HCT116 (cell line): ENCODE measurements at regions of chr5 and their contacts with region 1.

Region 1: GRCh38 chr5:39599721-39600431 is 175.1 kb upstream of the DAB2 start:
- DNase-seq: peak; percentile 24
- ATAC-seq: peak; percentile 42
- H3K4me3 ChIP-seq: no peak overlapping the region
- H3K27ac ChIP-seq: no peak overlapping the region
- H3K4me1 ChIP-seq: peaks cover 0 to 4% of the 10 kb centered on the region in 2 experiments; a peak in 1 of 4 replicates
- H3K27me3 ChIP-seq: no peaks in the 10 kb centered on the region
- CTCF ChIP-seq: peak; percentile 36 to 63 (median 56); a peak in 4 of 6 replicates
- POLR2A ChIP-seq: no peak
- RAD21 ChIP-seq: peak; percentile 78

Region 2: DNA sequence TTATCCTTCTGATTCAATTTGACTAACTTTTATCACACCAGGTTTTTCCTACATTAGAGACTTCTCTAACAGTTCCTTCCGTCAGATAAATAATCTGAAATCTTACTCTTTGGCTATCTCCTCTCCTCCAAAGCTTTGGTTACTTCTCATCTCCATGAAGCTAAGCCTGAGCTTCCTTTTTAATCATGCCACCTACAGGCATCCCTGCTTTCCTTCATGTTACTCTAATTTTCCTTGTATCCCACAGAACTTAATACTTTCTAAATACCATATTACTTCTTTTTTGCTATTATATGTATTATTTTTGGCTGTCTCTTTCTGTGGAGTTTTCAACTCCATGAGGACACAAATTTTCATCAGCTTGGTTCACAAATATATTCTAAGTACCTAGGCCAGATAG is 285.3 kb before region 1 on chr5:
- CTCF ChIA-PET with region 1: no interaction called
- POLR2A ChIA-PET with region 1: no interaction called
- RAD21 ChIA-PET with region 1: no interaction called
- intact Hi-C with region 1: no loop called
- DNase-seq: no peak
- ATAC-seq: no peak
- H3K4me3 ChIP-seq: no peak overlapping the region
- H3K27ac ChIP-seq: no peak overlapping the region
- H3K4me1 ChIP-seq: no peaks in the 10 kb centered on the region
- H3K27me3 ChIP-seq: no peaks in the 10 kb centered on the region
- CTCF ChIP-seq: no peak; a peak in 1 of 6 replicates
- POLR2A ChIP-seq: no peak
- RAD21 ChIP-seq: 0 out of 2 replicates have a peak, but pooled peaks have one; percentile 15

Region 3: GRCh38 chr5:39691993-39692392 is 92.1 kb after region 1 on chr5:
- CTCF ChIA-PET with region 1: no interaction called
- POLR2A ChIA-PET with region 1: no interaction called
- RAD21 ChIA-PET with region 1: no interaction called
- intact Hi-C with region 1: loop called (anchors 5 kb)
- DNase-seq: peak; percentile 15
- ATAC-seq: peak; percentile 84
- H3K4me3 ChIP-seq: no peak overlapping the region
- H3K27ac ChIP-seq: no peak overlapping the region
- H3K4me1 ChIP-seq: no peaks in the 10 kb centered on the region
- H3K27me3 ChIP-seq: no peaks in the 10 kb centered on the region
- CTCF ChIP-seq: peak; percentile 33 to 53 (median 37); a peak in 4 of 6 replicates
- POLR2A ChIP-seq: no peak
- RAD21 ChIP-seq: peak; percentile 48

Region 4: GRCh38 chr5:39948867-39949468 is 349.1 kb after region 1 on chr5:
- CTCF ChIA-PET with region 1: no interaction called
- POLR2A ChIA-PET with region 1: no interaction called
- RAD21 ChIA-PET with region 1: no interaction called
- intact Hi-C with region 1: loop called (anchors 10 kb)
- DNase-seq: peak; percentile 69
- ATAC-seq: peak; percentile 87
- H3K4me3 ChIP-seq: no peak overlapping the region
- H3K27ac ChIP-seq: no peak overlapping the region
- H3K4me1 ChIP-seq: no peaks in the 10 kb centered on the region
- H3K27me3 ChIP-seq: no peaks in the 10 kb centered on the region
- CTCF ChIP-seq: peak; percentile 52 to 74 (median 58); a peak in 5 of 6 replicates
- POLR2A ChIP-seq: no peak
- RAD21 ChIP-seq: peak; percentile 76